Activated CD4-positive, alpha-beta memory T cell treated with anti-CD3 and anti-CD28 coated beads for 36 hours (primary cell): ENCODE measurements at regions of chr5 and their contacts with region 1.

Region 1: GRCh38 chr5:179763215-179763945 is 30.4 kb upstream of the LTC4S start:
- DNase-seq: peak; percentile 62
- H3K4me3 Mint-ChIP-seq: no peak overlapping the region
- H3K27ac Mint-ChIP-seq: no peak overlapping the region
- H3K4me1 Mint-ChIP-seq: peaks cover 65% of the 10 kb centered on the region
- H3K27me3 Mint-ChIP-seq: no peaks in the 10 kb centered on the region

Region 2: GRCh38 chr5:178068293-178068692 is 1695.1 kb before region 1 on chr5:
- CTCF ChIA-PET with region 1: no interaction called
- POLR2A ChIA-PET with region 1: no interaction called
- intact Hi-C with region 1: no loop called
- DNase-seq: no peak
- H3K4me3 Mint-ChIP-seq: no peak overlapping the region
- H3K27ac Mint-ChIP-seq: no peak overlapping the region
- H3K4me1 Mint-ChIP-seq: no peaks in the 10 kb centered on the region
- H3K27me3 Mint-ChIP-seq: peaks cover 2% of the 10 kb centered on the region

Region 3: DNA sequence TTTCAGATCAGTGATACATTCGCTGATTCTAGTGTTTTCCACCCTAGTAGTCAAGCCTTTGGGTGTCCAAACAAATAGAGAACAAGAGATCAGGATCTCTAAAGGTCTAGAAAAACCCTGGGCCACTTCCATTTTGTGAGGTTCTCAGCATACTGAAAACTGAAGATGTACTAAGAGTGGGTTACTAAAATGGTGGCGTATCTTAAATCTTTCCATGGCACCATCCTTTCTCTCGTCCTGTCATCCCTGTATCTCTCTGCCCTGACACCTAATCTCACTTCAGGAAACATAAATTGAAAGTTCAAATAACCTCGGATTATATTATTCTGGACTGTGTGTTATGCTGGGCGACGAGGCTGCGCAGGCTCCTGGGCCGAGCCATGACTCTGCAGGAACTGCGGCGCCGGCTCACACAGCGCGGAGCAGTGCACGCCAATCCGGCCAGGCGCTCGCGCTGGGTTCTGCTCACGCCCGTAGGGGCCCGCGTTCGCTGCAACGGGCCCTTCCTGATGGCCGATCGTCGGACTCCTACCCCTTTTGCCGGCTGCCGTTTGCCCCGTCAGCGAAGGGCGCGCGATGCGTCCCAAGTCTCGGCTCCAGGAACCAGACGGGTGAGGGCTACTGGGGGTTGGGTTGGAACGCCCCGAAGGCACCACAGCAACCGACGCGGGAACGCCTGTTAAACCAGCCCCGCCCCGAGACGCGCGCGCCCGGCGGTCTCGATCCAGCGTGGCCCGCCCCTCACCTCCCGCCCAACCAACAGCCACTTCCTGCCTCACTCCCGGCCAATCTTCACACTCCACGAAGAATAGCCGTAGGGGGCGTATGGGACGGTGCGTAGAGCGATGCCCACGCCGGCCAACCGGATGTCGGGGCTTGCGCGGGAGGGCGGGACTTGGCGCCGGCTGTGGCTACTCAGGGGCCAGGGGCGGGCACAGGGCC is 65.1 kb before region 1 on chr5:
- CTCF ChIA-PET with region 1: no interaction called
- POLR2A ChIA-PET with region 1: no interaction called
- intact Hi-C with region 1: loop called (anchors 1 kb)
- DNase-seq: peak; percentile 100
- H3K4me3 Mint-ChIP-seq: peak overlapping the region; percentile 97
- H3K27ac Mint-ChIP-seq: peak overlapping the region; percentile 98
- H3K4me1 Mint-ChIP-seq: peaks cover 35% of the 10 kb centered on the region
- H3K27me3 Mint-ChIP-seq: no peaks in the 10 kb centered on the region

Region 4: GRCh38 chr5:179749857-179750508 is 13.4 kb before region 1 on chr5:
- CTCF ChIA-PET with region 1: interaction called, 14 read pairs
- POLR2A ChIA-PET with region 1: no interaction called
- intact Hi-C with region 1: no loop called
- DNase-seq: no peak
- H3K4me3 Mint-ChIP-seq: no peak overlapping the region
- H3K27ac Mint-ChIP-seq: peak overlapping the region; percentile 2
- H3K4me1 Mint-ChIP-seq: peaks cover 39% of the 10 kb centered on the region
- H3K27me3 Mint-ChIP-seq: no peaks in the 10 kb centered on the region

Region 5: DNA sequence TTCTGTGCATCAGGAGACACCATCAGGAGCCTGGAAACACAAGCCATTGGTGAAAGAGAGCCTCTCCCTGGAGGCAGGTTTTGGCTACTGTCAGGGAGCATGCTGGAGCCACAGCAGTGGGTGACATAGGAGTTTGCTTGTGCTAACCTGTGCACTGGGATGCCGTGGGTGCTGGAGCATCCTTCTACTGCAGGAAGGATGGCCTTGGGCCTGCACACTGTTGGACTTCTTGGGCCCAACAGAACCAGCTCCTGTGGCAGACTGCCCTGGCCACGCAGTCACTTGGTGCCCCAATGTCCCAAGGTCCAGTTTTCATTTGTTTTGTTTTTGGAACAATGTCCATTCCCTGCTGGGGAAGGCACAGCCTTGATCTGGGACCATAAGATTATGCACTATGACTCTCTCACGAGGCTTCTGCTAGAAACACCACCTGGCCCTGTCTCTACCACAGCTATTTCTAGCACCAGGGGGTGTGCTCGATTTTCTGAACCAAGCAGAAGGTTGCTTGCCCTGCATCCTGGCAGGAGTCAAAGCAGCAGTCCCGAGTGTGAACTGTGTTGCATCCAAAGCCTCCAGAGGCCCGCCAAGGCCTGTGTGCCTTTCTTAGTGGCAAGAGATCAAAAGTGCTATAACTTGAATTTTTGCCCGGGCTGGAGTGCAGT is 24.9 kb after region 1 on chr5:
- CTCF ChIA-PET with region 1: interaction called, 46 read pairs
- POLR2A ChIA-PET with region 1: no interaction called
- intact Hi-C with region 1: no loop called
- DNase-seq: no peak
- H3K4me3 Mint-ChIP-seq: no peak overlapping the region
- H3K27ac Mint-ChIP-seq: no peak overlapping the region
- H3K4me1 Mint-ChIP-seq: peaks cover 2% of the 10 kb centered on the region
- H3K27me3 Mint-ChIP-seq: no peaks in the 10 kb centered on the region

Region 6: DNA sequence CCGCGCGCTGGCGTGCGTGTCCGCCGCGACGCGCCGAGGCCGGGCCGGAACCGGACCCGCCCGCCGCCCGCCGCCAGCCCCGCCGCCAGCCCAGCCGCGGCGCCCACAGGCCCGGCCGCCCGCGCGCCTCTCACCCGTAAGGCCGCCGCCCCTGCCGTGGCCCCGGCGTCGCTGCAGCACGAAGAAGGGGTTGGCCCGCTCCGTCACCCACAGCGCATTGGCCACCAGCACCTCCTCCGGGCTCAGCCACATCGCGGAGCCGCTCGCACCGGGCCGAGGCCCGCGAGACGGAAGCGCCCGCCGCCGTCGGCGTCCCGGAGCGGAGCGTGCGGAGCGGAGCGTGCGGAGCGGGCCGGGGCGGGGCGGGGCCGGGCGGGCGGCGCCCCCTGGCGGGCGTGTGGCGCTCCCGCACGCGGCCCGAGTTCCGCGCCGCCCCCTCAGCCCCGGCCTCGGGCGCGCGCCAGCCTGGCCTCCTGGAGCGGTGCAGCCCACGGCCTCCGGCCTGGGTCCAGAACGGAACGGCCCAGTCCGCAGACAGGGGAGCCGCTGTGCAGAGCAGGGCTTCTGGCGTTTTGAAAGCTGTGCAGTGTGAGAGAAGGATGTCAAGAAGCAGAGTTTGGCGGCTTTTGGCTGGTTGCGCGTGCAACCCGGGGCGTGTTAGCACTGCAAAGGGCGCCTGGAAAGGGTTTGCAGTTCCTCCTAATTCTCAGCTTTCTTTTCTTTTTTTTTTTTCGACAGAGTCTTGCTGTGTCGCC is 144.4 kb after region 1 on chr5 and contains the start of gene TBC1D9B:
- CTCF ChIA-PET with region 1: interaction called, 4 read pairs
- POLR2A ChIA-PET with region 1: no interaction called
- intact Hi-C with region 1: loop called (anchors 10 kb)
- DNase-seq: peak; percentile 71
- H3K4me3 Mint-ChIP-seq: peak within 1 kb of the TSS; percentile 88
- H3K27ac Mint-ChIP-seq: peak within 1 kb of the TSS; percentile 69
- H3K4me1 Mint-ChIP-seq: peaks cover 14% of the 10 kb centered on the region
- H3K27me3 Mint-ChIP-seq: no peaks in the 10 kb centered on the region
- total RNA-seq, gene TBC1D9B: 59.0 to 62.8 TPM

Region 7: GRCh38 chr5:179954434-179954833 is 191.1 kb after region 1 on chr5:
- CTCF ChIA-PET with region 1: no interaction called
- POLR2A ChIA-PET with region 1: no interaction called
- intact Hi-C with region 1: no loop called
- DNase-seq: no peak
- H3K4me3 Mint-ChIP-seq: no peak overlapping the region
- H3K27ac Mint-ChIP-seq: no peak overlapping the region
- H3K4me1 Mint-ChIP-seq: no peaks in the 10 kb centered on the region
- H3K27me3 Mint-ChIP-seq: no peaks in the 10 kb centered on the region